B cell (primary cell): ENCODE measurements at regions of chr19 and their contacts with region 1.

Region 1: GRCh38 chr19:3108775-3109174 is 14.6 kb downstream of the GNA11 start:
- DNase-seq: peak; percentile 82
- ATAC-seq: peak; percentile 76
- H3K4me3 ChIP-seq: no peak overlapping the region
- H3K4me3 Mint-ChIP-seq: no peak overlapping the region
- H3K27ac ChIP-seq: no peak overlapping the region
- H3K27ac Mint-ChIP-seq: peak overlapping the region; percentile 17
- H3K4me1 ChIP-seq: peaks cover 5 to 14% of the 10 kb centered on the region in 2 donors
- H3K4me1 Mint-ChIP-seq: peaks cover 11% of the 10 kb centered on the region
- H3K27me3 ChIP-seq: no peaks in the 10 kb centered on the region
- H3K27me3 Mint-ChIP-seq: no peaks in the 10 kb centered on the region
- CTCF ChIP-seq: peak; percentile 88

Region 2: GRCh38 chr19:2962045-2962561 is 146.7 kb before region 1 on chr19:
- CTCF ChIA-PET with region 1: interaction called, 281 read pairs
- POLR2A ChIA-PET with region 1: no interaction called
- intact Hi-C with region 1: loop called (anchors 1 kb)
- DNase-seq: peak; percentile 91
- ATAC-seq: peak; percentile 73
- H3K4me3 ChIP-seq: peak overlapping the region in 3 of 5 experiments; percentile 2 to 33 (median 9)
- H3K4me3 Mint-ChIP-seq: peak overlapping the region; percentile 2
- H3K27ac ChIP-seq: no peak overlapping the region
- H3K27ac Mint-ChIP-seq: peak overlapping the region; percentile 71
- H3K4me1 ChIP-seq: peaks cover 13 to 18% of the 10 kb centered on the region in 2 donors
- H3K4me1 Mint-ChIP-seq: peaks cover 14% of the 10 kb centered on the region
- H3K27me3 ChIP-seq: no peaks in the 10 kb centered on the region
- H3K27me3 Mint-ChIP-seq: no peaks in the 10 kb centered on the region
- CTCF ChIP-seq: peak; percentile 82

Region 3: GRCh38 chr19:2983351-2984195 is 125.2 kb before region 1 on chr19:
- CTCF ChIA-PET with region 1: no interaction called
- POLR2A ChIA-PET with region 1: no interaction called
- intact Hi-C with region 1: no loop called
- DNase-seq: no peak
- ATAC-seq: peak; percentile 45
- H3K4me3 ChIP-seq: peak overlapping the region in 2 of 5 experiments; percentile 2 to 10
- H3K4me3 Mint-ChIP-seq: peak overlapping the region; percentile 47
- H3K27ac ChIP-seq: no peak overlapping the region
- H3K27ac Mint-ChIP-seq: no peak overlapping the region
- H3K4me1 ChIP-seq: peaks cover 14 to 22% of the 10 kb centered on the region in 2 donors
- H3K4me1 Mint-ChIP-seq: peaks cover 13% of the 10 kb centered on the region
- H3K27me3 ChIP-seq: peaks cover 0 to 15% (median 2%) of the 10 kb centered on the region in 4 experiments
- H3K27me3 Mint-ChIP-seq: peaks cover 9% of the 10 kb centered on the region
- CTCF ChIP-seq: no peak

Region 4: GRCh38 chr19:3075895-3076431 is 32.8 kb before region 1 on chr19:
- CTCF ChIA-PET with region 1: interaction called, 73 read pairs
- POLR2A ChIA-PET with region 1: interaction called, 5 read pairs
- intact Hi-C with region 1: loop called (anchors 1 kb)
- DNase-seq: peak; percentile 87
- ATAC-seq: peak; percentile 92
- H3K4me3 ChIP-seq: peak overlapping the region in 1 of 5 experiments; percentile 40
- H3K4me3 Mint-ChIP-seq: no peak overlapping the region
- H3K27ac ChIP-seq: no peak overlapping the region
- H3K27ac Mint-ChIP-seq: no peak overlapping the region
- H3K4me1 ChIP-seq: peaks cover 0 to 13% of the 10 kb centered on the region in 2 donors
- H3K4me1 Mint-ChIP-seq: peaks cover 9% of the 10 kb centered on the region
- H3K27me3 ChIP-seq: peaks cover 0 to 8% (median 2%) of the 10 kb centered on the region in 4 experiments
- H3K27me3 Mint-ChIP-seq: no peaks in the 10 kb centered on the region
- CTCF ChIP-seq: peak; percentile 88

Region 5: DNA sequence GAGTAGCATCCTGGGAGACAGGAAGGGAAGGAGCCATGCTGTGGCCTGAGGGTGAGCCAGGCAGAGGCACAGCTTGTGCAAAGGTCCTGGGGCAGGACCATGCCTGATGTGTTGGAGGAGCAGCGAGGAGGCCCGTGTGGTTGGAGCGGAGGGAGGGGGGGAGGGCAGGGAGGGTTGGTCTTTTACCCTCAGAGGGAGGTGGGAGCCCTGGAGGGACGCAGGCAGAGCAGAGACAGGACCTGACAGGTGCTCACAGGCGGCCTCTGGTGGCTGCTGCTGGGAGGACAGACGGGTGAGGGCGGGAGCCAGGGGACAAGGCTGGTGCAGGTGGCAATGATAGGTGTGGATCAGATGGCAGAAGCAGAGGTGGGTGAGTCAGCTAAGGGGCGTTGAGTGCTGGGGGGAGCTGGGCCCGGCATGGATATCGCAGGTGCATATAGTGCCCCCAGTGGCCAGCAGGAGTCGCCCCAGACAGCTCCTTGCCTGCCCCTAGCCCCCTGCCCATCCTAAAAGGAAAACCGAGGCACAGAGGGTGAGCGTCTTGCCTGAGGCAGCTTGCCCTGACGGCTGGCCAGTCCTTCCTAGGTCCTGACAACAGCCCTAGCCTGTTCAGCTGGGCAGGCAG is 17.2 kb after region 1 on chr19:
- CTCF ChIA-PET with region 1: interaction called, 14 read pairs
- POLR2A ChIA-PET with region 1: no interaction called
- intact Hi-C with region 1: no loop called
- DNase-seq: peak; percentile 65
- ATAC-seq: peak; percentile 69
- H3K4me3 ChIP-seq: no peak overlapping the region
- H3K4me3 Mint-ChIP-seq: no peak overlapping the region
- H3K27ac ChIP-seq: no peak overlapping the region
- H3K27ac Mint-ChIP-seq: peak overlapping the region; percentile 61
- H3K4me1 ChIP-seq: peaks cover 8 to 10% of the 10 kb centered on the region in 2 donors
- H3K4me1 Mint-ChIP-seq: peaks cover 21% of the 10 kb centered on the region
- H3K27me3 ChIP-seq: no peaks in the 10 kb centered on the region
- H3K27me3 Mint-ChIP-seq: no peaks in the 10 kb centered on the region
- CTCF ChIP-seq: peak; percentile 73